ENCODE measurements at regions of chr17 and their contacts with region 1.

Region 1: DNA sequence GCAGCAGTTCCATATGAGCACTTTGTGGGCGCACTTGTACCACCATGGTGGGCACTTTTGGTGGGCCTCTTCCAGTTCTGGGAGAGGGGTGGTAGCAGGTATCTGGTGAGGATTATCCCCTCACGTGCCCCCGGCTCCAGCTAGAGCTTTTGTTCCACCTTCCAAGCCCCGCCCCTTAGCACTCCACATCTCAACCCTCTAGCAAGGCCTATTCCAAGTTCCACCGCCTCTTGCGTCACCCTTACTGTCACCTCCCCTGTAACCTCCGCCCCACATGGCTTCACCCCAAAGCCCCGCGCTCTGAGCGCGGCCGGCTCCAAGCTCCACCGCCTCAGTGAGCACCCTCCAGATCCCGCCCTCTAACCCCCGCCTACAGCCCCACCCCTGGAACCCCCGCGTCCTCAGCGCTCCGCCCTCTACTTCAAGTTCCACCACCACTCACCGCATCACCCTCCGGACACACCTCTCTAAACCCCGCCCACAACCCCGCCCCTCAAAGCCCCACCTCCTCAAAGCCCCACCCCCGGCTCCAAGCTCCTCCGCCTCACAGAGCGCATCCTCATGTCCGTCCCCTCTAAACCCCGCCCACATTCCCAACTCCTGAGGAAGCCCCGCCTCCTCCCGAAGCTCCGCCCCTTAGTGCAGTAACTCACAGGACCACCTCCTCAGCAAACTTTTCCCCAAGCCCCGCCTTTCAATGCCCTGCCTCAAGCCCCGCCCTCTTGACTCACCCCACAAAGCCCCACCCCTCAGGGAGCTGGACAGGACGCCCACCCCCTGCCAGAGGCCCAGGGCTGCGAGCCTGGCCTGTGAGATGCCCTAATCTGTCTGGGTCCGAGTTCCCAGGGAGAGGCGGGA is 11.1 kb downstream of the SCN4A start:
- DNase-seq: peak; percentile 83 to 90
- ATAC-seq: peak; percentile 60 to 85
- H3K4me3 ChIP-seq: peak overlapping the region; percentile 43
- H3K27ac ChIP-seq: peak overlapping the region; percentile 23 to 66; a peak in 5 of 6 replicates
- H3K4me1 ChIP-seq: peaks cover 10% of the 10 kb centered on the region; the same call in 2 of the 3 replicates
- CTCF ChIP-seq: no peak
- EP300 ChIP-seq: no peak
- POLR2A ChIP-seq: no peak
- RAD21 ChIP-seq: no peak

Region 2: GRCh38 chr17:63785556-63785955 is 176.0 kb before region 1 on chr17:
- CTCF ChIA-PET with region 1: no interaction called
- POLR2A ChIA-PET with region 1: no interaction called
- DNase-seq: no peak
- ATAC-seq: no peak
- H3K4me3 ChIP-seq: no peak overlapping the region
- H3K27ac ChIP-seq: no peak overlapping the region
- H3K4me1 ChIP-seq: peaks cover 24% of the 10 kb centered on the region
- CTCF ChIP-seq: no peak
- EP300 ChIP-seq: no peak
- POLR2A ChIP-seq: no peak
- RAD21 ChIP-seq: no peak

Region 3: GRCh38 chr17:63974594-63975192 is 13.1 kb after region 1 on chr17:
- CTCF ChIA-PET with region 1: interaction called, 10 read pairs
- POLR2A ChIA-PET with region 1: no interaction called
- DNase-seq: peak in 1 of 2 experiments; percentile 63
- ATAC-seq: peak; percentile 61 to 74
- H3K4me3 ChIP-seq: no peak overlapping the region
- H3K27ac ChIP-seq: peak overlapping the region; percentile 49 to 68; a peak in 5 of 6 replicates
- H3K4me1 ChIP-seq: peaks cover 19% of the 10 kb centered on the region
- CTCF ChIP-seq: no peak
- EP300 ChIP-seq: no peak
- POLR2A ChIP-seq: no peak
- RAD21 ChIP-seq: no peak

Measured in A549 (cell line).